ENCODE measurements at regions of chr1 and their contacts with region 1.

Region 1: DNA sequence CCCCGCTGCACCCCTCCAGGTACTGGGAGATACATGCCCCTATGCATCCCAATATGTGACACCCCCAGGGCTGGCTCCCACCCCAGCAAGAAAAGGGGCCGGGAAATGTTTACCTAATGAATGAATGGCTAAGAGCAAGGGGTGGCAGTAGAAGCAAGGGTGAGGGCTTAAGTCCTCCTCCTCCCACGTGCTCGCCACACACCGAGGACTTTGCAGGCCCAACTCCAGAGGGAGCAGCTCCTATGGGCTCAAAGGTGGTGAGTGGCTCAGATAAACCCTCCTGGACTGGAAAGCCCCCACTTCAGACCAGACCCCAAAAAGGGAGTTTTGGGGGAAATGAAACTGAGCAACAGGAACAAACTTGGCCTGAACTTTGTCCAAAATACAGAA is 11.4 kb downstream of the SLC45A3 start:
- DNase-seq: no peak

Region 2: DNA sequence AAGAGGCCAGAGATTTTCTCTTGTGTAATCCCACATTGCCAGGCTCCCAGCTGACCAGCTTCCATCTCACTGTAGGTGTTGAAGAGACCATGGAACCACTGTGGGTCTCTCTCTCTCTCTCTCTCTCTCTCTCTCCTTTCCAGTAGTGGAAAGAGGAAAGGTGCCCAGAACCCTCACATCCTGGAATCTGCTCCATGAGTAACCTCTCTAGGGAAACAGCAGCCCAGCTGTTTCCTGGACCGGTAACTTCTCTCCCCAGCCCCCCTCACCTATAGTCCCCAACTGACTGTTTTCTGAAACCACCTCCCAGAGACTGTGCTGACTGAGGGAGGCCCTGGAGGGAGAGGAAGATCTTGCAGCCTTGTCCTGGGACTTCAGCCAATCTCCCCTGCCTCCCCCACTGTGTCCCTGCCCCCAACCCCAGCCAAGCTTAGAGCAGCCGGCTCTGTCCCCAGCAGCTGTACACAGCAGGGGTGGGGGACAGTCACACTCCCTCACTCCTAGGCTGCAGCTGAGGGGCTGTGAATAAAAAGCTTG is 32.0 kb after region 1 on chr1:
- intact Hi-C with region 1: loop called in 1 of 2 experiments (anchors 5 kb)
- DNase-seq: no peak

Region 3: GRCh38 chr1:205986252-205986651 is 317.3 kb after region 1 on chr1:
- intact Hi-C with region 1: no loop called
- DNase-seq: no peak

Region 4: GRCh38 chr1:206663832-206664652 is 995.1 kb after region 1 on chr1:
- intact Hi-C with region 1: loop called in 1 of 2 experiments (anchors 10 kb)
- DNase-seq: no peak